Mammary epithelial cell (primary cell): ENCODE measurements at regions of chr13 and their contacts with region 1.

Region 1: GRCh38 chr13:108433976-108434755 is 164.6 kb downstream of the TNFSF13B start:
- DNase-seq: peak; percentile 31
- H3K4me3 ChIP-seq: no peak overlapping the region
- H3K27ac ChIP-seq: no peak overlapping the region
- H3K4me1 ChIP-seq: peaks cover 6% of the 10 kb centered on the region
- H3K27me3 ChIP-seq: peaks cover 2% of the 10 kb centered on the region
- CTCF ChIP-seq: no peak

Region 2: GRCh38 chr13:108463340-108463739 is 29.2 kb after region 1 on chr13:
- CTCF ChIA-PET with region 1: no interaction called
- dilution Hi-C with region 1: loop called (anchors 5 kb)
- in situ Hi-C with region 1: no loop called
- intact Hi-C with region 1: no loop called
- DNase-seq: peak; percentile 82
- H3K4me3 ChIP-seq: no peak overlapping the region
- H3K27ac ChIP-seq: peak overlapping the region; percentile 92
- H3K4me1 ChIP-seq: peaks cover 5% of the 10 kb centered on the region
- H3K27me3 ChIP-seq: no peaks in the 10 kb centered on the region
- CTCF ChIP-seq: no peak